ENCODE measurements at regions of chr1 and their contacts with region 1.

Region 1: GRCh38 chr1:23825076-23825761 is at the start of gene HMGCL:
- DNase-seq: peak; percentile 81
- ATAC-seq: peak; percentile 95
- H3K4me3 Mint-ChIP-seq: peak within 1 kb of the TSS; percentile 96
- H3K27ac Mint-ChIP-seq: peak within 1 kb of the TSS; percentile 95
- H3K4me1 Mint-ChIP-seq: peaks cover 20% of the 10 kb centered on the region
- H3K27me3 Mint-ChIP-seq: no peaks in the 10 kb centered on the region
- CTCF ChIP-seq: no peak
- total RNA-seq, gene HMGCL: 21.0 and 30.7 TPM in 2 replicates

Region 2: GRCh38 chr1:23800400-23801337 is 24.6 kb before region 1 on chr1 and contains the start of gene GALE:
- CTCF ChIA-PET with region 1: no interaction called
- POLR2A ChIA-PET with region 1: interaction called, 27 read pairs
- intact Hi-C with region 1: loop called (anchors 1 kb)
- DNase-seq: peak; percentile 94
- ATAC-seq: peak; percentile 95
- H3K4me3 Mint-ChIP-seq: peak within 1 kb of the TSS; percentile 91
- H3K27ac Mint-ChIP-seq: peak within 1 kb of the TSS; percentile 76
- H3K4me1 Mint-ChIP-seq: peaks cover 21% of the 10 kb centered on the region
- H3K27me3 Mint-ChIP-seq: no peaks in the 10 kb centered on the region
- CTCF ChIP-seq: no peak
- total RNA-seq, gene GALE: 15.9 and 16.4 TPM in 2 replicates

Region 3: DNA sequence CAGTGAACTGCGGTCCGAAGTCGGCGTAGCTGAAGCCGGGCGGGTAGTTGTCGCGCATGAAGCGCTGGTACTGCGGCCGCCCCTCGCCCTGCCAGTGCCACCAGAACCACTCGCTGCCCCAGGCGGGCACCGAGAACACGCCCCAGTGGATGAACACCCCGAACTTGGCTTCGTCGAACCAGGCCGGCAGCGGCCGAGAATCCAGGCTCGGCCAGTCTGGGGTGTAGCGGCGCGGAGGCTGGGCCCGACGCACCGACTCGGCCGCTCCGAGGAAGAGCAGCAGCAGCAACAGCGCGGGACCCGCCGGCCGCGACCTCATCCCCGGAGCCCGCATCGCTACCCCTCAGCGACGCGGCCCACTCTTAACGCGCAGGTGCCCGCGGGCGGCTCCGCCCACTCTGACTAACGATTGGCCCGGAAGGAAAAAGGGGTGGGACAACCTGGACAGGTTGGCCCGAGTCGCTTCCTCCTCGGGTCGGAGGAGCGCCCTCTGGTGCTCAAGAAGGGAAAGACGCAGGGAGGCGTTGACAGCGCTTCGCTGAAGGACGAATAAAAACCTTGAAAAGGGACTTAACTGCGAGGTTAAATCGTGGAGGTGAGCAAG is 42.8 kb after region 1 on chr1 and contains the start of gene FUCA1:
- CTCF ChIA-PET with region 1: no interaction called
- POLR2A ChIA-PET with region 1: interaction called, 6 read pairs
- intact Hi-C with region 1: loop called (anchors 1 kb)
- DNase-seq: peak; percentile 92
- ATAC-seq: peak; percentile 97
- H3K4me3 Mint-ChIP-seq: peak within 1 kb of the TSS; percentile 84
- H3K27ac Mint-ChIP-seq: peak within 1 kb of the TSS; percentile 87
- H3K4me1 Mint-ChIP-seq: peaks cover 36% of the 10 kb centered on the region
- H3K27me3 Mint-ChIP-seq: no peaks in the 10 kb centered on the region
- CTCF ChIP-seq: no peak
- total RNA-seq, gene FUCA1: 9.5 and 10.7 TPM in 2 replicates

Region 4: GRCh38 chr1:23878668-23879067 is 53.4 kb after region 1 on chr1:
- CTCF ChIA-PET with region 1: no interaction called
- POLR2A ChIA-PET with region 1: no interaction called
- intact Hi-C with region 1: no loop called
- DNase-seq: no peak
- ATAC-seq: no peak
- H3K4me3 Mint-ChIP-seq: no peak overlapping the region
- H3K27ac Mint-ChIP-seq: no peak overlapping the region
- H3K4me1 Mint-ChIP-seq: peaks cover 15% of the 10 kb centered on the region
- H3K27me3 Mint-ChIP-seq: no peaks in the 10 kb centered on the region
- CTCF ChIP-seq: no peak

Region 5: GRCh38 chr1:23902321-23903278 is 77.4 kb after region 1 on chr1:
- CTCF ChIA-PET with region 1: no interaction called
- POLR2A ChIA-PET with region 1: interaction called, 43 read pairs
- intact Hi-C with region 1: no loop called
- DNase-seq: peak; percentile 23
- ATAC-seq: no peak
- H3K4me3 Mint-ChIP-seq: peak overlapping the region; percentile 67
- H3K27ac Mint-ChIP-seq: peak overlapping the region; percentile 93
- H3K4me1 Mint-ChIP-seq: peaks cover 83% of the 10 kb centered on the region
- H3K27me3 Mint-ChIP-seq: no peaks in the 10 kb centered on the region
- CTCF ChIP-seq: no peak